ENCODE measurements at regions of chr17 and their contacts with region 1.

Region 1: DNA sequence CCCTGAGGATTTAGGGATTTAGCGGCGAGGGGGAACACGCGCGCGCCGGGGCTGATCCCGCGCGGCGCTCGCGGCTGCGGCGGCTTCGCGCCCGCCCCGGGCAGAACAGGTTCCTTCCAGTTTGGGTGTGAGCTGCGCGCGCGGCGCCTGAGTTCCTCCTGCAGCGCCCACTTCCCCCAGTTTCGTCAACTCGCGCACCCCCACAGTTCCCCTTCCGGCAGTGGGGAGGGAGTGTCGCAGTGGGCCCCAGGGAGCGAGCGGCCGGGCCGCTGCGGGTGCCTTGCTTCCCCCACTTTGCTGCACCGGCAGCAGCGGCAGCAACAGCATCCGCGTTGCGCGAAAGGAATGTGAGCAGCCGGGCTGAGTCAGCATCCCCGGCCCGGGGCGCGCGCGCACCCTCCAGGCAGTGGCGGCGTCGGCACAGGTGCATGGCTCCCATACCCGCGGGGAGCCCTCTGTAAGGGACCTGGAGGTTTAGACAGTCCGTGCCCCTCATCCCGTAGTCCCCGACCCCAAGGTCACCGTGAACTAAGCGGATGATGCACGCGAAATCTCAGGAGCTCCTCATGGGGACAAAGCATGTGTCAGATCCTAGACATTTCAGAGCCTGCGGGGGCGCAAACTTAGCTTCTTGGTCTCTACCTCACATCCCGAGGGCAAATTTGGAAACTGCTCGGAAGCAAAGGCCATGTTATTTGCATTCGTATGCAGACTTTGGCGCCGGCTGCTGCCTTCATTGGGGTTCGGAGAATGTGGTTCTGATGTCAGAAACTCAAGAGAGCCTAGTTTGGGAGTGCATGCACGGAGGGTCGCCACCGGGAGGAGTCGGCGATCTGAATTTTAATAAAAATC is 775 bp downstream of the ARSG start:
- DNase-seq: peak; percentile 80 to 98 (median 96)
- ATAC-seq: peak; percentile 83
- H3K4me3 ChIP-seq: peak overlapping the region; percentile 92
- H3K4me3 Mint-ChIP-seq: peak overlapping the region; percentile 82 to 100 (median 88)
- H3K27ac ChIP-seq: peak overlapping the region; percentile 95
- H3K27ac Mint-ChIP-seq: peak overlapping the region; percentile 83 to 99 (median 91)
- H3K4me1 ChIP-seq: peaks cover 53% of the 10 kb centered on the region in 2 donors
- H3K4me1 Mint-ChIP-seq: peaks cover 46 to 79% (median 69%) of the 10 kb centered on the region in 7 donors
- H3K27me3 ChIP-seq: no peaks in the 10 kb centered on the region
- H3K27me3 Mint-ChIP-seq: peaks cover 0 to 16% (median 0%) of the 10 kb centered on the region in 5 donors

Region 2: DNA sequence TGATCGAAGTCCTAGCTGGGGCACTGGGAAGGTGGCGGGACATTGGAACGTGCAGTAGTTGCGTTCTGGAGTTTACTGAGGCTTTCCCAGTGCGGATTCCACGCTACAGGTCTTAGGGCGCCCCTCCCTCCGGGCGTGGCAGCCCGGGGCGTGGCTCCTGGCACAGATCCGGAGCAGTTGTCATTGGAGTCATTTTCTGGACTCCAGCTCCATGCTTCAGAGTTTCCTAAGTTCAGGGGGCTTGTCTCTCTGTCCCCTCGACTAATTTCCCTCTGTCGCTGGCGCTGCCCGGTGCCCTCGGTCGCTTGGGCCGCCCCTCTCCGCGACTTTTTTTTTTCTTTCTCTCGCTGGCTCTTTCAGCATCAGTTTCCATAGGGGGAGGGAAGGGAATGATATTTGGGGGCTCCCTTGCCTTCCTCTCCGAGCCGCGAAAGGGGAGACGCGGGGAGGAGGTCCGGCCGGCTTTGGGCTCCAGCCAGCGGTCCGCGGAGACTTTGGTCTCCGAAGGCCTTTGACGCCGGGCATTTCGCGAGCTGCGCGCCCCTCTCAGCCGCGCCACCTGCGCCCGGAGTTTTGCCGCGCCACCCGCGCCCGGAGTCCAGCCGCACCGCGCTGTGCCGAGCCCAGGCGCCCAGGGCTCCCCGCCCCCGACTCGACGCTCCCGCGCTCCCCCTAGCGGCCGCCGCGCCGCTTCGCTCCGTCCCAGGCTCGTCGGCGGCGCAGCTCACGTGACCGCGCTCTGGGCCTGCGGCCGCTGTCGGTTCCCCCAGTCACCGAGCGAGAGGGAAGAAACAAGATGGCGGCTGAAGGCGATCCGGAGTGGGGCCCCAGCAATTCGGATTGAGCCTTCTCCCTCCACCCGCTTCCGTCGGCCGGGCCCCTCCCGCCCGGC is 467.1 kb before region 1 on chr17 and contains the start of gene BPTF:
- CTCF ChIA-PET with region 1: no interaction called
- POLR2A ChIA-PET with region 1: interaction called, 3 read pairs
- intact Hi-C with region 1: loop called in 1 of 2 experiments (anchors 5 kb)
- DNase-seq: peak; percentile 84 to 95 (median 90)
- ATAC-seq: peak; percentile 93
- H3K4me3 ChIP-seq: peak within 1 kb of the TSS; percentile 77
- H3K4me3 Mint-ChIP-seq: peak within 1 kb of the TSS; percentile 85 to 99 (median 98)
- H3K27ac ChIP-seq: peak within 1 kb of the TSS; percentile 74
- H3K27ac Mint-ChIP-seq: peak within 1 kb of the TSS; percentile 96 to 99 (median 98)
- H3K4me1 ChIP-seq: peaks cover 17 to 28% of the 10 kb centered on the region in 2 donors
- H3K4me1 Mint-ChIP-seq: peaks cover 20 to 39% (median 33%) of the 10 kb centered on the region in 7 donors
- H3K27me3 ChIP-seq: no peaks in the 10 kb centered on the region
- H3K27me3 Mint-ChIP-seq: peaks cover 0 to 23% (median 0%) of the 10 kb centered on the region in 5 donors
- total RNA-seq, gene BPTF: 111 to 219 (median 163) TPM

Region 3: DNA sequence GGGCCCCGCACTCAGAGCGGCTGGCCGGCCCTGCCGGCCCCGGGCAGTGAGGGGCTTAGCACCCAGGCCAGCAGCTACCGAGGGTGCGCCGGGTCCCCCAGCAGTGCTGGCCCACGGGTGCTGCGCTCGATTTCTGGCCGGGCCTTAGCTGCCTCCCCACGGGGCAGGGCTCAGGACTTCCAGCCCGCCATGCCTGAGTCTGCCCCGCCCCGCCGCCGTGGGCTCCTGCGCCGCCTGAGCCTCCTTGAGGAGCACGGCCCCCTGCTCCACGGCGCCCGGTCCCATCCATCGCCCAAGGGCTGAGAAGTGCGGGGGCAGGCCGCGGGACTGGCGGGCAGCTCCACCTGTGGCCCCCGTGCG is 112.2 kb before region 1 on chr17:
- CTCF ChIA-PET with region 1: no interaction called
- POLR2A ChIA-PET with region 1: interaction called, 5 read pairs
- intact Hi-C with region 1: loop called in 1 of 2 experiments (anchors 2 kb)
- DNase-seq: no peak
- ATAC-seq: no peak
- H3K4me3 ChIP-seq: no peak overlapping the region
- H3K4me3 Mint-ChIP-seq: no peak overlapping the region
- H3K27ac ChIP-seq: no peak overlapping the region
- H3K27ac Mint-ChIP-seq: peak overlapping the region in 2 of 9 donors; percentile 87 to 90
- H3K4me1 ChIP-seq: peaks cover 18 to 37% of the 10 kb centered on the region in 2 donors
- H3K4me1 Mint-ChIP-seq: peaks cover 17 to 58% (median 49%) of the 10 kb centered on the region in 7 donors
- H3K27me3 ChIP-seq: no peaks in the 10 kb centered on the region
- H3K27me3 Mint-ChIP-seq: no peaks in the 10 kb centered on the region

Region 4: DNA sequence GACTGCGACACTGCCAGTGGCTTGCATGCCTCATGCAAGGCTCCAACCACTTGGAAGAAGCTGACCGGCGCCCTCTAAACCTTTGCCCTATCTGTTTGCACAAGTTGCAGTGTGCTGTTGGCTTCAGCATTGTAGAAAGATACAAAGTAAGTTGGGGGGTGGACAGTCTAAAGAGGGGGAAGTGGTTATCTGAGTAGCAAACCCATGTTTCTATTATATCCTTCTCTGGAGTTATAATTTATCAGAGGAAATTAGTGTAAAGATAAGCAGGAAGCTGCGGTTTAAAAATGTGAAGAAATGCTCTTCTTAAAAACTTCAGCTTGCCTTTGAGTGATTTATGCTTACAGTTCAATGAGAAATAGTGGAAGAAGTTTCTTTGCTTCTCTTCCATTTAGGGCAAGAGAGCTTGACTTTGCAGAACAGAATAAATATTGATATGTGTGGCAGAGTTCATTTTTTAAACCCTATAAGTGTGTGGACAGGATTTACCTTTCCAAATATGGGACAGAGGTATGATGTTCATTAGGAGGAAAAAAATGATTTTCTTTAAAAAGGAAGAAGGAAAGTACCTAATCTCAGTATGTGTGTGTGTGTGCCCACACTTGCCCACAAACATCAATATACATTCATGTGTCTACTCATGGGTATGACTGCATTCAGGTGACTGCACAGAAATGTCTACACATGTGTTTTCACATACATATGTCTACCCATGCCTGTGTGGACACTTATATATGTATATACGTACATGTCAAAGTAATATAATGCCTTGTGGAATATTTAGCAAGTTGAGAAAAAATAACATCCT is 36.1 kb before region 1 on chr17:
- CTCF ChIA-PET with region 1: interaction called, 5 read pairs
- POLR2A ChIA-PET with region 1: interaction called, 28 read pairs
- intact Hi-C with region 1: loop called in 1 of 2 experiments (anchors 5 kb)
- DNase-seq: peak in 4 of 9 donors; percentile 27 to 44 (median 36)
- ATAC-seq: peak; percentile 32
- H3K4me3 ChIP-seq: peak overlapping the region; percentile 7
- H3K4me3 Mint-ChIP-seq: peak overlapping the region in 9 of 10 donors; percentile 18 to 70 (median 62)
- H3K27ac ChIP-seq: peak overlapping the region; percentile 92
- H3K27ac Mint-ChIP-seq: peak overlapping the region; percentile 77 to 97 (median 93)
- H3K4me1 ChIP-seq: peaks cover 74 to 91% of the 10 kb centered on the region in 2 donors
- H3K4me1 Mint-ChIP-seq: peaks cover 42 to 84% (median 75%) of the 10 kb centered on the region in 7 donors
- H3K27me3 ChIP-seq: no peaks in the 10 kb centered on the region
- H3K27me3 Mint-ChIP-seq: no peaks in the 10 kb centered on the region

Region 5: DNA sequence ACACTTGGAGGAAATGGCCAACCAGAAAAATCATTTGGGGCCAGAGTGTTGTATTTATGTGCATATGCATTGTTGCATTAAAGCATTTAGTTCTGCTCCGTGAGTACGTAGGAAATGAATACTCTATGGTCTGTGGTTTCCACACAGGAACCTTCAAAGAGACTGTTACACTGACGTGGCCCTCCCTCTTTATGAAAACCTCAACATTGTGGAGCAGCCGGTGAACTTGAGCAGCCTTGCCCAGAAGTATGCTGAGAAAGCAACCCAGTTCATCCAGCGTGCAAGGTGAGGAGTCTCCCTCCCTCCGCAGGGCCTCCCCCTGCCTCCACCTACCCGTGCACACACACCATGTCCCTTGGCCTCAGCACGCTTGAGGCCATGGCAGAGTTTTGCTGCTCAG is 64.5 kb after region 1 on chr17:
- CTCF ChIA-PET with region 1: interaction called, 9 read pairs
- POLR2A ChIA-PET with region 1: interaction called, 84 read pairs
- intact Hi-C with region 1: loop called (anchors 1 kb)
- DNase-seq: peak in 8 of 9 donors; percentile 67 to 86 (median 80)
- ATAC-seq: peak; percentile 98
- H3K4me3 ChIP-seq: peak overlapping the region; percentile 33
- H3K4me3 Mint-ChIP-seq: peak overlapping the region; percentile 73 to 86 (median 80)
- H3K27ac ChIP-seq: peak overlapping the region; percentile 24
- H3K27ac Mint-ChIP-seq: peak overlapping the region; percentile 24 to 91 (median 82)
- H3K4me1 ChIP-seq: peaks cover 54 to 56% of the 10 kb centered on the region in 2 donors
- H3K4me1 Mint-ChIP-seq: peaks cover 43 to 69% (median 62%) of the 10 kb centered on the region in 7 donors
- H3K27me3 ChIP-seq: no peaks in the 10 kb centered on the region
- H3K27me3 Mint-ChIP-seq: no peaks in the 10 kb centered on the region

Region 6: GRCh38 chr17:68435876-68436842 is 144.1 kb after region 1 on chr17:
- CTCF ChIA-PET with region 1: interaction called, 10 read pairs
- POLR2A ChIA-PET with region 1: interaction called, 58 read pairs
- intact Hi-C with region 1: loop called (anchors 1 kb)
- DNase-seq: peak; percentile 62 to 87 (median 82)
- ATAC-seq: peak; percentile 90
- H3K4me3 ChIP-seq: no peak overlapping the region
- H3K4me3 Mint-ChIP-seq: peak overlapping the region; percentile 3 to 78 (median 62)
- H3K27ac ChIP-seq: no peak overlapping the region
- H3K27ac Mint-ChIP-seq: peak overlapping the region; percentile 1 to 94 (median 41)
- H3K4me1 ChIP-seq: peaks cover 32% of the 10 kb centered on the region in 2 donors
- H3K4me1 Mint-ChIP-seq: peaks cover 30 to 67% (median 51%) of the 10 kb centered on the region in 7 donors
- H3K27me3 ChIP-seq: no peaks in the 10 kb centered on the region
- H3K27me3 Mint-ChIP-seq: no peaks in the 10 kb centered on the region

Region 7: GRCh38 chr17:68670967-68671693 is 379.1 kb after region 1 on chr17:
- CTCF ChIA-PET with region 1: no interaction called
- POLR2A ChIA-PET with region 1: no interaction called
- intact Hi-C with region 1: no loop called
- DNase-seq: no peak
- ATAC-seq: no peak
- H3K4me3 ChIP-seq: no peak overlapping the region
- H3K4me3 Mint-ChIP-seq: no peak overlapping the region
- H3K27ac ChIP-seq: no peak overlapping the region
- H3K27ac Mint-ChIP-seq: no peak overlapping the region
- H3K4me1 ChIP-seq: no peaks in the 10 kb centered on the region
- H3K4me1 Mint-ChIP-seq: no peaks in the 10 kb centered on the region
- H3K27me3 ChIP-seq: no peaks in the 10 kb centered on the region
- H3K27me3 Mint-ChIP-seq: peaks cover 23 to 54% (median 43%) of the 10 kb centered on the region in 5 donors

Measured in naive thymus-derived CD4-positive, alpha-beta T cell (primary cell).